Psoas muscle (tissue), 8 donors: ENCODE measurements at regions of chr5 and their contacts with region 1.

Region 1: GRCh38 chr5:32092938-32093812 is 80.9 kb downstream of the GOLPH3 start:
- DNase-seq: no peak
- ATAC-seq: peak; percentile 84 to 93 (median 88)
- H3K4me3 ChIP-seq: no peak overlapping the region
- H3K27ac ChIP-seq: no peak overlapping the region
- H3K4me1 ChIP-seq: peaks cover 23% of the 10 kb centered on the region
- H3K27me3 ChIP-seq: no peaks in the 10 kb centered on the region
- CTCF ChIP-seq: peak; percentile 85

Region 2: GRCh38 chr5:31581498-31582099 is 511.6 kb before region 1 on chr5:
- intact Hi-C with region 1: loop called (anchors 5 to 10 kb)
- DNase-seq: no peak
- ATAC-seq: peak in 1 of 4 donors; percentile 30
- H3K4me3 ChIP-seq: no peak overlapping the region
- H3K27ac ChIP-seq: no peak overlapping the region
- H3K4me1 ChIP-seq: no peaks in the 10 kb centered on the region
- H3K27me3 ChIP-seq: peaks cover 0 to 1% (median 0%) of the 10 kb centered on the region in 3 donors
- CTCF ChIP-seq: peak; percentile 46

Region 3: DNA sequence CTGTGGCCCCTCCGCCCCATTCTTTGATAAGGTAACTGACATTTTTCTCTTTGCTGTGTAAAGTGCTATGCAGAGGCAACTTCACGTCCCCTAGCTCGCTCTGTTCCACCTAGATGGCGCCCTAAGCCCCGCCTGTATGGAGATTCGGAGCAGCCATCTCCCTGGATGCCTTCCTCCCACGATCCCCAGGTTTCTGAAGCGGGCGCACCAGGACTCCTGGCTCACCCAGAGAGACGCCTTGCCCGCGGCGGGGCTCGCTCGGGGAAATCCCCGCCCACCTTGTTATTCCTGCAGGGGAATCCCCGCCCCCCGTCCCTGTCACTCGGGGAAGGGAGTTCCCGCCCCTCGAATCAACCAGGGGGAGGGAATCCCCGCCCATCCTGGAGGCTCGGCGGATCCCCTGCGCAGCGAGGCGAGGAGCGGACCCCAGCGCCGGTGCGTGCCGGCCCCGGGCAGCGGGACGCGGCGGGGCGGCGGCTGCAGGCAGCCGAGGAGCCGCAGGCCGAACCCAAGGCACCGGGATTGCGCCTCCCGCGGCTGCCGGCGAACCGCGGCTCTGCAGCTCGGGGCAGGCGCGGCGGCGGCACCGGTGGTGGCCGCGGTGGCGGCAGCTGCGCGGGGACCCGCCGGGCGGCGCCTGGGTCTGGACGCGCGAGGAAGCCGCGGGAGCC is 454.3 kb before region 1 on chr5 and contains the start of gene PDZD2:
- intact Hi-C with region 1: loop called in 1 of 2 experiments (anchors 10 kb)
- DNase-seq: peak; percentile 82 to 85
- ATAC-seq: peak; percentile 78 to 88 (median 83)
- H3K4me3 ChIP-seq: peak within 1 kb of the TSS; percentile 88
- H3K27ac ChIP-seq: peak within 1 kb of the TSS; percentile 27
- H3K4me1 ChIP-seq: peaks cover 9% of the 10 kb centered on the region
- H3K27me3 ChIP-seq: peaks cover 0 to 7% (median 0%) of the 10 kb centered on the region in 3 donors
- CTCF ChIP-seq: peak; percentile 37
- total RNA-seq, gene PDZD2: 4.4 to 17.5 (median 7.0) TPM

Region 4: DNA sequence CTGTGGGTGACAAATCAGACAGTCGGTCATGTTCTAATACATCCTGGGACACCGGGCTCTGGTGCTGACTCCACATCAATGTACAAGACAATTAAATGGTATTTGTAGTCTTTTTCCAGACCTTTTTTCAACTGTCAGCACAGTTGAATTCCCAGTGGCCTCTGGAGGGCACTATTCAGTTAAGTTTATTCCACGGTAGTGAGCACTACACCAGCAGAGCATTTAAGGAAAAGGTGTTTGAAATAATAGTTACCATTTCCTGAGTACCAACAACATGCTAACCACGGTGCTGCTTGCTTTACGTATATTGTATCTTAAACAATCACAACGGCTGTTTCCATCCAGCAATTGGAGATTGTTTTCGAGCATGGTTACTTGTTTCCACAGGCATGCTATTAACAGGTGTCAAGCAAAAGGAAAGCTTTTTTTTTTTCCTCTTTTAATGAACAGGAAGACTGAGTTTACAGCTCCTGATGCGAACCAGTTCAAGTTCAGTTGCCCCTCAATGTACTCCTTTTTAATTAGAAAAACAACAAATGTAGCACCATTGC is 267.6 kb before region 1 on chr5:
- intact Hi-C with region 1: loop called (anchors 2 to 5 kb)
- DNase-seq: peak in 1 of 2 donors; percentile 17
- ATAC-seq: peak; percentile 60 to 81 (median 78)
- H3K4me3 ChIP-seq: no peak overlapping the region
- H3K27ac ChIP-seq: no peak overlapping the region
- H3K4me1 ChIP-seq: no peaks in the 10 kb centered on the region
- H3K27me3 ChIP-seq: no peaks in the 10 kb centered on the region
- CTCF ChIP-seq: peak; percentile 73

Region 5: DNA sequence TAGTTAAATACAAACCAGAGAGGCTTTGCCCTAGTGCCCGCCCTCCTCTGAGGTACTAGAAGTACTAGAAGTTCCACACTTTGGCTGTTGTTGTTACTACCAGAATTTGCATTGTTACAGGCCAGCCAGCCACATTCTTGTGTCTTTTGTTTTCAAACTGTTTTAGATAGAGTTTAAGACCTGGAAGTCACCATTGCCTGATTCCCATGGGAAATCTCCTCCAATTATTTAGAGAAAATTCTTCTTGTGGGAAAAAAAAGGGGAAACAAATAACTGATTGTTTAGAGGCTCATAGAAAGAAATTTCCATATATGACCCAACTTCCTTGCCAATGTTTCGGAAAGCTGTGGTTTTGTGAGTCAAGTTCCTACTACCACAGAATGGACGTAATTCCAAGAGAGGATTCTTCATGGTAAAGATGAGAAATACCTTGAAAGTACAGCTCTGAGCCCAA is 171.3 kb before region 1 on chr5:
- intact Hi-C with region 1: loop called in 1 of 2 experiments (anchors 5 kb)
- DNase-seq: no peak
- ATAC-seq: no peak
- H3K4me3 ChIP-seq: no peak overlapping the region
- H3K27ac ChIP-seq: no peak overlapping the region
- H3K4me1 ChIP-seq: no peaks in the 10 kb centered on the region
- H3K27me3 ChIP-seq: no peaks in the 10 kb centered on the region
- CTCF ChIP-seq: no peak

Region 6: DNA sequence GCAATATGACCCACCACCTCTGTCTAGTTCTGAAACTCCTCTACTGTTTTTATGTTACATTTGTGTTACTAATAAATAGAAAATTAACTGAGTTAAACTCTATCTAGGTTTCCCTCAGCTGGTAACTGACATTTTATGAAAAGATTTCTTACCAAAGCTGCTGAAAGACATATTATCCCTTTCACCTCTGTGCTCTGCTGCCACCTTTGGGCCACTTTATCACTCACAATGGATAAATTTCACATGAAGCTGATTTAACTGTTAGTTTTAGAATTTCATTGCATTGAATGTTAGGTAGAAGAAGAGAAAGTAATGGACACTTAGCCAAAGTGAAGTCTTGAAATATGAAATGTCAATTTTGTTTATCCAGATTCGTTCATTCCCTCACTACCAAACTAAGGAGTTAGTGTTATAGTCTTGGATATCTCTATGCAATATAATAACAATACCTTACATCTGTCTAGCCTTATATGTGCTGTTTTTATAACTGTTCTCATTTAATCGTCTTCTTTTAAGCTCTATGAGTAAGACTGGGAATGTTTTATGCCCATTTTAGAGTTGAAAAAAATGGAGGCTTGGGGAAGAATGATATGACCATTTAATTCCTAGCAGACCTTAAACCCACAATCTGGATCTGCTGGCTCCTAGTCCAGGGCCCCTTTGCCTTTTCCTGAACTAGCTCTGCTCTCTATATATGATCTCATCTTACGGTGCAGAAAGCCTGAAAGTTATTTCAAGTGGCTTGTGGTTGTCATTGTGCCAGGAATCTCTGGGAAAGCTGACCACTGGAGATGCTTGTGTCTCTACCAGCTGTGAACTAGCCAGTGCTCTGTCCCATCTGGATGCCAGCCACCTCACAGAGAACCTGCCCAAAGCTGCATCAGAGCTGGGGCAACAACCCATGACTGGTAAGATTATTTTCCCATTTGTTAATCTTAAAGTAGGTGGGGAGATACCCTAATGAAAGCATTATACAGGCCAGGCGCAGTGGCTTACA is 16.2 kb before region 1 on chr5:
- intact Hi-C with region 1: no loop called
- DNase-seq: peak in 1 of 2 donors; percentile 39
- ATAC-seq: peak; percentile 87 to 95 (median 88)
- H3K4me3 ChIP-seq: no peak overlapping the region
- H3K27ac ChIP-seq: no peak overlapping the region
- H3K4me1 ChIP-seq: peaks cover 8% of the 10 kb centered on the region
- H3K27me3 ChIP-seq: no peaks in the 10 kb centered on the region
- CTCF ChIP-seq: peak; percentile 79

Region 7: DNA sequence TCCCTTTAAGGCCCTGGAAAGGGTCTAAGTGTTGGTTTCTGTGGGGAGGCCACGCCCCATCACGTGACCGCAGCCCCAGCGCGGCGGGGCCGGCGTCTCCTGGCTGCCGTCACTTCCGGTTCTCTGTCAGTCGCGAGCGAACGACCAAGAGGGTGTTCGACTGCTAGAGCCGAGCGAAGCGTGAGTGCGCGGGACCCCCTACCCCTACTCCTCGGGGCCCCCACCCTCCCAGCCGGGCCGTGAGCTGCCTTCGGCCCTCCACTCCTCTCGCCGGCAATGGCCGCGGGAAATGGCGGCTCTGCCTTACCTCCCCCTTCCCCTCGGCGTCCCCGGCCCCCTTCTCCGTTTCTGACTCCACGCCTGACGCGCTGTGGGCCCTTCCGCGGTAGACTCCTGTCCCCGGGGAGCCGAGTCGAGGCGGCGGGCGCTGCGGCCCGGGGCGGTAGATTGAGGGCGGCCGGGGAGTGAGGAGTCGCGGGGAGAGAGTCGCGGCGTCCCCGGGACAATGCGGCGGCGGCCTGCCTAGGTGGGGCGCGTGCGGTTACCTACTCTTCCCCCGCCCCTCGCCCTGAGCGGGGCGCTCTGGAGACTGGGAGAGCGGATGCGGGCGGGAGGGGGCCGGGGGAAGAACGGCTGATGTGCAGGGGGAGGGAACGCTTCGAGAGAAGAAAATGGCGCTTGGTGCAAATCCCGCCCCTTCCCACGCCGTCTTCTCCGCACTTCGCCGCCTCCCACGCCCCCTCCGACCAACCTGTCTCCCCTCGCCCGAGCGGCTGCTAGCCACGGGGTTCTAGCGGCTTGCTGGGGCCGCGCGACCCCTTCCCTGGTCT is 492.5 kb after region 1 on chr5 and contains the start of gene SUB1:
- intact Hi-C with region 1: no loop called
- DNase-seq: peak; percentile 94 to 96
- ATAC-seq: peak; percentile 96 to 99 (median 97)
- H3K4me3 ChIP-seq: peak within 1 kb of the TSS; percentile 96
- H3K27ac ChIP-seq: peak within 1 kb of the TSS; percentile 100
- H3K4me1 ChIP-seq: peaks cover 13% of the 10 kb centered on the region
- H3K27me3 ChIP-seq: no peaks in the 10 kb centered on the region
- CTCF ChIP-seq: no peak
- total RNA-seq, gene SUB1: 112 to 174 (median 150) TPM

Region 8: GRCh38 chr5:32679218-32679617 is 586.0 kb after region 1 on chr5:
- intact Hi-C with region 1: no loop called
- DNase-seq: no peak
- ATAC-seq: no peak
- H3K4me3 ChIP-seq: no peak overlapping the region
- H3K27ac ChIP-seq: no peak overlapping the region
- H3K4me1 ChIP-seq: no peaks in the 10 kb centered on the region
- H3K27me3 ChIP-seq: no peaks in the 10 kb centered on the region
- CTCF ChIP-seq: no peak

Region 9: DNA sequence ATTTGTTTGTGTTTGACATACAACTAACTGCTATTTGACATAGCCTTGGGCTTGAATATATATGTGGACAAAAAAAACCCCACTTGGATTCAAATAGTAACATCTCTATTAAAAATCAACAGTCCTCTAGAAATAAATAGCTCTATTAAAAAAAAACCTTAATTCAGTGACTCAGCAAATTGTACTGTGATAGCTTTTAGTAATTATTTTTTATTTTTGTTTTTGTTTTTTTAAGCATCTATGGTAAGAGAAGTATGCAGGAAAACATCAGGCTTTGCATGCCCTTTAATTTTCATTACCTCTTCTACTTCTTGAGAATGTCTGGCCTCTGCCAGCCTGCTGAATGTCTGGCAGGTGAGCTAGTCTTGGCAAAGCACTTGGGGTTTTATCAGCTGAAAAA is 918.6 kb after region 1 on chr5:
- intact Hi-C with region 1: no loop called
- DNase-seq: no peak
- ATAC-seq: no peak
- H3K4me3 ChIP-seq: no peak overlapping the region
- H3K27ac ChIP-seq: no peak overlapping the region
- H3K4me1 ChIP-seq: no peaks in the 10 kb centered on the region
- H3K27me3 ChIP-seq: no peaks in the 10 kb centered on the region
- CTCF ChIP-seq: no peak